ENCODE measurements at regions of chr13 and their contacts with region 1.

Region 1: GRCh38 chr13:23966691-23967615 is 69.7 kb upstream of the C1QTNF9B start:
- DNase-seq: peak; percentile 31
- H3K4me3 Mint-ChIP-seq: peak overlapping the region; percentile 51
- H3K27ac Mint-ChIP-seq: peak overlapping the region; percentile 83
- H3K4me1 Mint-ChIP-seq: peaks cover 30% of the 10 kb centered on the region
- H3K27me3 Mint-ChIP-seq: no peaks in the 10 kb centered on the region

Region 2: DNA sequence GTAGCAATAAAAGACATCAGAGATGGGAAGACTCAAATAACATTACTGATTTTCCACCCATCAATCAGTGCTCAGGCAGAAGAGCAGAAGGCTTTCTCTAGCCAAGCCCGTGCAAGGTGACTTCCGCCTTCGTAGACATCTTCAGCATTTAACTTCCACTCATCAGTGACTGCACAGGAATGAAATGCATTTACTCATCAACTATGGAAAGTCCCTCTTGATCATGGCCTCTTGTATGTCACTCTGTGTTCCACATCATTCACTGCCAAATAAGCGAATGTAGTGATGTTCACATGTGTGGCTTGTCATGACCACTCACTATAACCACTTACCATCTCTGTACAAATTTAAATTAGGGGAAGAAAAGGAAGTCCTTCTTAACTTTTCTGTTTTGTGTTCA is 582.8 kb before region 1 on chr13:
- CTCF ChIA-PET with region 1: no interaction called
- POLR2A ChIA-PET with region 1: no interaction called
- intact Hi-C with region 1: loop called (anchors 2 kb)
- DNase-seq: peak; percentile 50
- H3K4me3 Mint-ChIP-seq: no peak overlapping the region
- H3K27ac Mint-ChIP-seq: no peak overlapping the region
- H3K4me1 Mint-ChIP-seq: peaks cover 46% of the 10 kb centered on the region
- H3K27me3 Mint-ChIP-seq: peaks cover 4% of the 10 kb centered on the region

Region 3: DNA sequence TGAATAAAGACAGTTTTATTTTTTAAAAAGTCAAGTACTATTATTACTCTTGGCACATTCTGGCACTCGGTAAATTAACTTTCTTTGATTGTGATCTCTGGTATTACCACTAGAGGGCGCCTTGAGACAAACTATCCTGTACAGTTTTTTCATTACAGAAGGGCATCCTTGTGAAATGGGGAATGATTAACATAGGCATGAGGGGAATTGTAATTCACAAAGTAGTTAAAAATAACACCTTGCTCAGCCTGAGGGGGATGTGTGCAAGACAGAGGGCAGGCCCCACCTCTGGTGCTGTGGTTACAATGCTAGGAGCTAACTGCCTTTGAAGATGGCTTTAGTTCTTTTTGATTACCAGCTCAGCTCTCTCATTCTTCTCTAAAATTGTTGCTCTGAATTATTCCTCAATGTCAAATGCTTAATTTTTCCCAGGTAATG is 45.5 kb before region 1 on chr13:
- CTCF ChIA-PET with region 1: interaction called, 34 read pairs
- POLR2A ChIA-PET with region 1: no interaction called
- intact Hi-C with region 1: loop called (anchors 2 kb)
- DNase-seq: no peak
- H3K4me3 Mint-ChIP-seq: no peak overlapping the region
- H3K27ac Mint-ChIP-seq: no peak overlapping the region
- H3K4me1 Mint-ChIP-seq: no peaks in the 10 kb centered on the region
- H3K27me3 Mint-ChIP-seq: peaks cover 20% of the 10 kb centered on the region

Region 4: DNA sequence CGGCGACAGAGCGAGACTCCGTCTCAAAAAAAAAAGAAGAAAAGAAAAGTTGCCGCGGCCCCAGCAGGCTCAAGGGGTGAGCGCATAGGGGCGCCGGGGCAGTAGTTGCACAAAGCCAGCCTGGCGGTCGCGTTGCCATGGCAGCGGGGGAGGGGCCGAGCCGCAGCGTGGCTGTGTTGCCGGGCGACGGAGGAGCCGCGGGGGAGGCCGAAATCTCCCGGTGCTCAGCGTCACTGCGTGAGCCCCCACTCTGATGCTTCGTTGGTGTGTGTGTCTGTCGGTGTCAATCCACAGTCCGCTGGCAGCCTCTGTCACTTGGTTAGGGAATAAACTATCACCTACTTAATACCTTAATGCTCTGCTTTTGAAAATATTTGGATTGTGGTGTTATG is 13.2 kb after region 1 on chr13:
- CTCF ChIA-PET with region 1: interaction called, 3 read pairs
- POLR2A ChIA-PET with region 1: interaction called, 4 read pairs
- intact Hi-C with region 1: loop called (anchors 2 kb)
- DNase-seq: peak; percentile 90
- H3K4me3 Mint-ChIP-seq: peak overlapping the region; percentile 67
- H3K27ac Mint-ChIP-seq: peak overlapping the region; percentile 49
- H3K4me1 Mint-ChIP-seq: peaks cover 12% of the 10 kb centered on the region
- H3K27me3 Mint-ChIP-seq: peaks cover 23% of the 10 kb centered on the region

Region 5: GRCh38 chr13:23990455-23990854 is 23.5 kb after region 1 on chr13:
- CTCF ChIA-PET with region 1: no interaction called
- POLR2A ChIA-PET with region 1: no interaction called
- intact Hi-C with region 1: no loop called
- DNase-seq: no peak
- H3K4me3 Mint-ChIP-seq: no peak overlapping the region
- H3K27ac Mint-ChIP-seq: no peak overlapping the region
- H3K4me1 Mint-ChIP-seq: no peaks in the 10 kb centered on the region
- H3K27me3 Mint-ChIP-seq: peaks cover 26% of the 10 kb centered on the region